ENCODE measurements at regions of chr14 and their contacts with region 1.

Region 1: GRCh38 chr14:24146978-24147760 is at the start of gene RNF31:
- DNase-seq: peak; percentile 97
- H3K4me3 ChIP-seq: peak within 1 kb of the TSS; percentile 59 to 86 (median 79)
- H3K27ac ChIP-seq: peak within 1 kb of the TSS; percentile 52
- H3K4me1 ChIP-seq: peaks cover 17% of the 10 kb centered on the region
- H3K27me3 ChIP-seq: no peaks in the 10 kb centered on the region
- CTCF ChIP-seq: no peak
- POLR2A ChIP-seq: peak; percentile 75
- total RNA-seq, gene RNF31: 66.5 and 69.7 TPM in 2 replicates

Region 2: DNA sequence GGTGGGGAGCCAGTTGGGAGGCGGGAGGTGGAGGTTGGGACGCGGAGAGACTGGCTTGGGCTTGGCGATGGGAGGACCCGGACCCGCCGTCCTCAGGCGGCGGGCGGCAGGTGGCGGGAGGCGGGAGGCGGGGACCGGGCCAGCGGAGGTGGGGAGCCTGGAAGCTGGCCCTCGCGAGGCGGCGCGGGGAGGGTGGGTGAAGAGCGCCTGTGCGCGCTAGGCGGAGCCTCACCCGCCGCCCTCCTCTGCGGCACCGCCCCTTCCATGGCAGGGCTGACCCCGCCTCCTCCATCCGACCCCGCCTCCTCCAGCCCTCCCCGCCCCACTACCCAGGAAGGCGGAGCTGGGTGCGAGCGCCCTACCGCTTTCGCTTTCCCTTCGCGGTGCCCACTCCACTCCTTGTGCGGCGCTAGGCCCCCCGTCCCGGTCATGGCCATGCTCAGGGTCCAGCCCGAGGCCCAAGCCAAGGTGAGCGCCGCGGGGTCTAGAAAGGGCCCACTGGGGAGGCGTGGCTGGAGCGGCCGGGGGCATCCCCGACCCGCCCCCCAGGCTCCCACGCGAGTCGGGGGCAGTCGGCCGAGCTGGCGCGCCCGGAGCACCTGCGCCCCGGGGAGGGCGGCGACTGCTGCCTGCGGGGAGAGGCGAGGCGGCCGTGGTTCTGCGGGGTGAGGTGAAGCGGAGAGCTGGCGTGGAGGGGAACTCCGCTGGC is 11.2 kb before region 1 on chr14 and contains the start of gene PSME1:
- CTCF ChIA-PET with region 1: interaction called, 14 read pairs
- POLR2A ChIA-PET with region 1: interaction called, 8 read pairs
- dilution Hi-C with region 1: no loop called
- intact Hi-C with region 1: loop called (anchors 1 kb)
- DNase-seq: peak; percentile 92
- H3K4me3 ChIP-seq: peak within 1 kb of the TSS; percentile 56 to 93 (median 90)
- H3K27ac ChIP-seq: peak within 1 kb of the TSS; percentile 54
- H3K4me1 ChIP-seq: peaks cover 15% of the 10 kb centered on the region
- H3K27me3 ChIP-seq: no peaks in the 10 kb centered on the region
- CTCF ChIP-seq: no peak
- POLR2A ChIP-seq: peak; percentile 78
- total RNA-seq, gene PSME1: 120 and 135 TPM in 2 replicates

Region 3: DNA sequence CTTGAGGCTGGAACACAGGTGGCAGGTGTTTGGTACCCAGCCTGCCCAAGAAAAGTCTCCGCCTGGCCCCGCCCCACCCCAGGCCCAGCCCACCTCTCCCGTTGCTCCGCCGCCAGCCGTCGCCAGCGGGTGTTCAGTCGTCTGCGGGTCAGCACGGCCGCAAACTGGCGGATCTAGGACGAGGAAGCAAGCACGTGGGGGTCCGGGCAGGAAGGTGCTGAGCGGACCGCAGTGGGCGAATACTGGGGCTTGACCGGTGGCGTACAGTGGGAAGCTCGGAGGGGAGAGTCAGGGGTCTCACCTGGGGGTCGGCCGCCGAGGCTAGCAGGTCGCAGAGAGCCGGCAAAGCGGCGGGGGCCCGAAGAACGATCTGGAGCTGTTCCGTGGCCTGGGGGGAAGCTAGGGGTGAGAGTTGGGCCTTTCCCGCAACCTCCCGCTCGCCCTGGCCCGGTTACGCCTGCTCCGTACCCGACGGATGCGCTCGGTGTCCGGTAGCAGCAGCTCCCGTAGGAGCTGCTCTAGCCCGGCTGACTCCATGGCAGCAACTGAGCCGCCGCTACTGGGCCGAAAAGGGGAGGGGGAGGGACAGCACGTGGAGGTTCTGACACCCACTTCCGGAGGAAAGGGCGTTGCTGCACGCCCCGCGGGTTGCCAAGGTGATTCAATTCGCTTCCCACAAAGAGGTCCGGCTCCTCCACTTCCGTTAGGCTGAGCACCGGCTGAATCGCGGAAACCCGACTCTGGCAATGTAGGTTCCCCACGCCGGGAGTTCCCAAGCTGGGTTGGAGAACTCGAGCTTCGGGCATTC is 41.3 kb after region 1 on chr14 and contains the start of gene IPO4:
- CTCF ChIA-PET with region 1: no interaction called
- POLR2A ChIA-PET with region 1: no interaction called
- dilution Hi-C with region 1: no loop called
- intact Hi-C with region 1: loop called (anchors 2 kb)
- DNase-seq: peak; percentile 94
- H3K4me3 ChIP-seq: peak within 1 kb of the TSS; percentile 31 to 65 (median 37)
- H3K27ac ChIP-seq: peak within 1 kb of the TSS; percentile 45
- H3K4me1 ChIP-seq: peaks cover 6% of the 10 kb centered on the region
- H3K27me3 ChIP-seq: no peaks in the 10 kb centered on the region
- CTCF ChIP-seq: no peak
- POLR2A ChIP-seq: peak; percentile 94
- total RNA-seq, gene IPO4: 52.6 and 66.5 TPM in 2 replicates